ENCODE measurements at regions of chr5 and their contacts with region 1.

Region 1: DNA sequence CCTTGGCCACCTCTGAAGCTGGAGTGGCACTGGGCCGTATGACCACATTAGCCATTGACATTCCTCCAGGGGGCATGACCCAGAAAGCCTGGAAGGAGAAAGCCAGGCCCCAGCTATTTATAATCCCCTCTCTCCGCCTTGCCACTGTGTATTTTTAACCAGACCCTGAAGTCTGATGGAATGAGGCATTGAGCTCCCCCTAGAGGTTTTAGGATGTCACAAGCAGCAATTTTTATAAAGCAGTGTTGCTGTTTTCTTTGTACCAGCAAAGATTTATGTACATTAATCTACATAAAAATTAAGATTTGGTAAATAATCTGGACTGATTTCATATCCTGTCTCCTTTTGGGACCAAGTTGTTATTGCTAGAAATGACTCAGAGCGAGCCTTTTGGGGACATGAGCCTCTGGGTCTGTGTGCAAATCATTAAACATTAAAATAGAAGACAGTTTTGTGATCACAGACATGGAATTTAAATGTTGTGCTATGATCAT is 127.1 kb downstream of the TRIO start:
- DNase-seq: peak in 1 of 3 donors; percentile 46
- ATAC-seq: peak; percentile 84
- H3K4me3 ChIP-seq: no peak overlapping the region
- H3K4me1 ChIP-seq: peaks cover 24% of the 10 kb centered on the region
- CTCF ChIP-seq: peak; percentile 66

Region 2: DNA sequence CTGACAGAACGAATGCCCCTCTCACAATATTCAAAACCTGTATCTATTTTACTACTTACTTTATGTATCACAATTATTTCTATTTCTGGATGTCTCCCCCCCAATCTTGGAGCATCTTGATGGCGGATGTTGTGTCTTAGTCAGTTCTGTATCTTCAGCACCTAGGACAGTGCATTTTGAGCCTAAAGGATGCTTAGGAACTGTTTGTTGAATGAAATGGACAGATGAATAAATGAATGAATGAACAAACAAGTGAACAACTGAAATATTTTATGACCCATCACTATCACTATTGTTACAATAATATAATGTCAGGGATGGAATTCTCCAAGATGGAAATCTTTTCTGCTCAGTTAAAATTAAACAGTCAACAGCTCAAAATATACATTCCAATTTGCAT is 621.4 kb before region 1 on chr5:
- intact Hi-C with region 1: no loop called
- DNase-seq: no peak
- ATAC-seq: no peak
- H3K4me3 ChIP-seq: no peak overlapping the region
- H3K4me1 ChIP-seq: no peaks in the 10 kb centered on the region
- CTCF ChIP-seq: no peak

Region 3: DNA sequence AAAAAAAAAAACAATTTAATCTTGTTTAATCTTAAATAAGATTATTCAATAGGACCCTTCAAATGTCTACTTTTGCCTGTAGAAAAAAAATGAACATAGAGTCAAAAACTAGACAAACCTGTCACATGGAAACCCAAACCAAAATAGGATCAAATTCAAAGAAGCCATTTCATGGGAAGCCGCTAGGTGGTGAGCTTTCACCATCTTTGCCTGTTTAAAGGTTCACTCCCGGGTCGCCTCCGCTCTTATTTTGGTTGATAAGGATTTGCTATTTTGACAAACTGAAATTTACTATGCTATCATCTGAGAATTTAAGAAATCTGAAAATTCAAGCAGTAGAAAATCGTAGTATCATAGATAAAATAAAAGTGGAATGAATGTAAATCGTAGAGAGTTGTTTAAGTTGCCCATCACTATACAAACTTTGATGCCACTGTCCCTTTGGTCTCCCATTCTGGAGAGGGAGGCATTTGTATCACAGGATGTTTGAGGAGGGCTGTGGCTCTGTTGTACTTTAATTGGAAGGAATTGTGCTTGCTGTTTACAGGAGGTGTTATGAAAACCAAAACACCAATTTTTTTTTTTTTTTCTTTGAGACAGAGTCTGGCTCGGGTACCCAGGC is 282.3 kb before region 1 on chr5:
- intact Hi-C with region 1: loop called in 1 of 2 experiments (anchors 10 kb)
- DNase-seq: peak in 1 of 3 donors; percentile 58
- ATAC-seq: peak; percentile 60
- H3K4me3 ChIP-seq: no peak overlapping the region
- H3K4me1 ChIP-seq: no peaks in the 10 kb centered on the region
- CTCF ChIP-seq: peak; percentile 61

Region 4: GRCh38 chr5:14101922-14102321 is 168.3 kb before region 1 on chr5:
- intact Hi-C with region 1: loop called (anchors 5 kb)
- DNase-seq: no peak
- ATAC-seq: no peak
- H3K4me3 ChIP-seq: no peak overlapping the region
- H3K4me1 ChIP-seq: no peaks in the 10 kb centered on the region
- CTCF ChIP-seq: no peak

Region 5: GRCh38 chr5:14108170-14108996 is 161.9 kb before region 1 on chr5:
- intact Hi-C with region 1: loop called (anchors 5 kb)
- DNase-seq: peak; percentile 47 to 81 (median 50)
- ATAC-seq: peak; percentile 90
- H3K4me3 ChIP-seq: no peak overlapping the region
- H3K4me1 ChIP-seq: no peaks in the 10 kb centered on the region
- CTCF ChIP-seq: peak; percentile 40

Region 6: GRCh38 chr5:14142827-14143548 is 127.3 kb before region 1 on chr5 and contains the start of gene TRIO:
- intact Hi-C with region 1: loop called (anchors 5 to 10 kb)
- DNase-seq: peak; percentile 92 to 97 (median 96)
- ATAC-seq: peak; percentile 78
- H3K4me3 ChIP-seq: peak within 1 kb of the TSS; percentile 82
- H3K4me1 ChIP-seq: peaks cover 26% of the 10 kb centered on the region
- CTCF ChIP-seq: peak; percentile 54
- total RNA-seq, gene TRIO: 164 to 231 (median 168) TPM